ENCODE measurements at regions of chr3 and their contacts with region 1.

Region 1: GRCh38 chr3:49339945-49340800 is at the start of gene USP4:
- DNase-seq: peak; percentile 94 to 96
- ATAC-seq: peak; percentile 97
- H3K4me3 ChIP-seq: peak within 1 kb of the TSS; percentile 78 to 88
- H3K27ac ChIP-seq: peak within 1 kb of the TSS; percentile 63 to 88
- H3K4me1 ChIP-seq: no peaks in the 10 kb centered on the region
- H3K27me3 ChIP-seq: no peaks in the 10 kb centered on the region
- total RNA-seq, gene USP4: 65.0 to 81.5 TPM

Region 2: DNA sequence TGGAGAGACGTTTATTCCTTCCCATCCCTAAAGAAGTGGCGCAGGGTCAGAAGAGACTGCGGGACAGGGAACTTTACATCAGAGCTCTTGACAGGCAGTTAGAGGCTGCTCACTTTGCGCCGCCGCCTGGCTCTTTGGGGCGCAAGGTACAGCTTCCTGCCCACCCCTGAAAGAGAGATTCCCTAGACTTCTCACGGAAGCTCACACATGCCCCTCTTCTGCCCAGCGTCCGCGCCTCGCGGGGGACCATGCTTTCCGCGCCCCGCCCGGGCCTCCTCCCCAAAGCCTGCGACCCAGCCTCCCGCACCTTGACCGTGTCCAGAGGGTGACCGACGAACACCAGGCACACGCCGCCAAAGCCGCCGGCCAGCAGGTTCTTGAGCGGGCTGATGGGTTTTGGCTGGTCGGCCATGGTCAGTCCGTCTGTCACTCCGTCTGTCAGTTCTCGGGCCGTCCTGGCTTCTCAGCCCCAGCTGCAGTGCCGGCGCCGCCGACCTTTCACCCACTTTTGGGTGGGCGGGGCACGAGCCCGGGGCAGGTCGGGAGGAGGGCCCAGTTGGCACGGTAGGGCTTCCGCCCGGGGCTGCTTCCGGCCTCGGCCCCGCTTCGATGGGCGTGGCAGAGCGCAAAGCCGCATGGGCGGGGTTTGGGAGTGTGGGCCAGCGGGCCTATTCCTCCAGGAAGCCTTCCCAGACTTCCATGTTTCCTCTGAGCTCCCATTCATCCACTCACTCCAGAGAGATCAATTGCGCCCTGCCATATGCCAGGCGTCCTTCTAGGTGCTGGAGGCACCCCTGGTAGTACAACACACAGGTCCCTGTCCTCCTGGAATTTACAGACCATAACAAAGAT is 441.6 kb before region 1 on chr3 and contains the start of gene SLC25A20:
- intact Hi-C with region 1: no loop called
- DNase-seq: peak; percentile 94 to 98
- ATAC-seq: peak; percentile 96
- H3K4me3 ChIP-seq: peak within 1 kb of the TSS; percentile 35 to 51
- H3K27ac ChIP-seq: peak within 1 kb of the TSS in 1 of 2 donors; percentile 68
- H3K4me1 ChIP-seq: peaks cover 0 to 3% of the 10 kb centered on the region in 2 donors
- H3K27me3 ChIP-seq: no peaks in the 10 kb centered on the region
- total RNA-seq, gene SLC25A20: 11.8 to 12.4 TPM

Region 3: GRCh38 chr3:49276475-49277382 is 63.4 kb before region 1 on chr3 and contains the start of gene C3orf62:
- intact Hi-C with region 1: loop called in 1 of 2 experiments (anchors 2 kb)
- DNase-seq: peak; percentile 96 to 97
- ATAC-seq: peak; percentile 97
- H3K4me3 ChIP-seq: peak within 1 kb of the TSS; percentile 10 to 51
- H3K27ac ChIP-seq: peak within 1 kb of the TSS; percentile 84 to 86
- H3K4me1 ChIP-seq: no peaks in the 10 kb centered on the region
- H3K27me3 ChIP-seq: no peaks in the 10 kb centered on the region
- total RNA-seq, gene C3orf62: 4.3 to 5.9 TPM

Region 4: DNA sequence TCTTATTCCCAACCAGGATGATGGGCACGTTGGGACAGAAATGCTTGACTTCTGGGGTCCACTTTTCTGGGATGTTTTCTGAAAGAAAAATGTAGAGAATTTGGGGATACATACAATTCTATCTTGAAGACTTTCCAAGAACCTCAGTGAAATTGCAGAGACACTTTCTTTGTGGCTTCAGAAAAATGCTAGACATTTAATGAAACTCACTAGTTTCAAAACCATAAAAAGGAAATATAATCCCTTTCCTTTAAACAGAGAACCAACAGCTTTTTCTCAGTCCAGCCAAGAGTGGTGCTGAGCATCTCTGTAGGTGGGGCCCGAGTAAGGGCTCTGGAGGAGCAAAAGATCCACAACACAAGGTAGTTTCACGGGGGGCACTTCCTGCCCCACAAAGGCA is 22.4 kb after region 1 on chr3:
- intact Hi-C with region 1: no loop called
- DNase-seq: no peak
- ATAC-seq: no peak
- H3K4me3 ChIP-seq: no peak overlapping the region
- H3K27ac ChIP-seq: no peak overlapping the region
- H3K4me1 ChIP-seq: no peaks in the 10 kb centered on the region
- H3K27me3 ChIP-seq: no peaks in the 10 kb centered on the region

Region 5: GRCh38 chr3:49445381-49445780 is 105.2 kb after region 1 on chr3:
- intact Hi-C with region 1: loop called (anchors 5 kb)
- DNase-seq: no peak
- ATAC-seq: no peak
- H3K4me3 ChIP-seq: no peak overlapping the region
- H3K27ac ChIP-seq: no peak overlapping the region
- H3K4me1 ChIP-seq: no peaks in the 10 kb centered on the region
- H3K27me3 ChIP-seq: no peaks in the 10 kb centered on the region